ENCODE measurements at regions of chr14 and their contacts with region 1.

Region 1: DNA sequence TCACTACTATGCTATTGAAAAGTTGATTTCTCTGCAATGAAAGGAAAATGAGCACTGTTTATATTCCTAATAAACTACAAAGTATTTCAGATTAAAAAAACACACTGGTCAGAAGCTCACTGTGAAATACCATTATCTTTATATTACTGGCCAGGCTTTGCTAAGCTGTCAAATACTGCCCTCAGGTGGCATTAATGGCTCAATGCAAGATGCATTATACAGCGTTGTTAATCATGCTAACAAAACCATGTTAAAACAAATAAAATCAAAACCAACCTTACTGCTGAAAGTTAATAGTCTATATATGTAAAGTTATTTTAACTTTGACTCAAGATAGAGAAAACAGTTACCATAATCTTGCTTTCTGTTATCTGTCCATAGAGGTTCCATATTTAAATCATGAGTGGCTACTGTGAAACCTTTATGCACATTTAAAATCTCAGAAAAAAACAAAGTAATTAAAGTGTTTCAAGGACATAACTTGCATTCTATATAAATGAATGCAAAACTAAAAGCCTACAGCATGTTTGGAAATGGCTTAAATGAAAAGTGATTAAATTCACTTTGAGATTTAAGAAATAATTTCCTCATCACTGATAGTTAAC is 121.7 kb downstream of the RALGAPA1 start:
- DNase-seq: peak; percentile 26
- H3K4me3 Mint-ChIP-seq: no peak overlapping the region
- H3K27ac Mint-ChIP-seq: no peak overlapping the region
- H3K4me1 Mint-ChIP-seq: peaks cover 15% of the 10 kb centered on the region
- H3K27me3 Mint-ChIP-seq: no peaks in the 10 kb centered on the region

Region 2: GRCh38 chr14:35140718-35141581 is 546.5 kb before region 1 on chr14:
- CTCF ChIA-PET with region 1: no interaction called
- POLR2A ChIA-PET with region 1: no interaction called
- intact Hi-C with region 1: loop called (anchors 5 kb)
- DNase-seq: no peak
- H3K4me3 Mint-ChIP-seq: no peak overlapping the region
- H3K27ac Mint-ChIP-seq: no peak overlapping the region
- H3K4me1 Mint-ChIP-seq: peaks cover 17% of the 10 kb centered on the region
- H3K27me3 Mint-ChIP-seq: no peaks in the 10 kb centered on the region

Region 3: DNA sequence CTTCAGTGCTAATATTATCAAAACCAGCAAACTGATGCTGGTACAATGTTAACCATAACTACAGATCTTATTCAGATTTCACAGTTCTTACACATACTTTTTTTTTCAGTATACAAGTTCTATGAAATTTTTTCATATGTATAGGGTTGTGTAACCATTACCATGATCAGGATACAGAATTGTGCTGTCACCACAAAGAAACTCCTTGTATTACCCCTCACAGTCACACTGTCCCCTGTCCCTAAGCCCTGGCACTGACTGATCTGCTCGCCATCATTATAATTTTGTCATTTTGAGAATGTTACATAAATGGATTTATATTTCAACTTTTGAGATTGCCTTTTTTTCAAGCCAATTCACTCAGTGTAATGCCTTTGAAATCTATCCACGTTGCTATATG is 261.6 kb before region 1 on chr14:
- CTCF ChIA-PET with region 1: interaction called, 3 read pairs
- POLR2A ChIA-PET with region 1: no interaction called
- intact Hi-C with region 1: loop called (anchors 2 kb)
- DNase-seq: no peak
- H3K4me3 Mint-ChIP-seq: no peak overlapping the region
- H3K27ac Mint-ChIP-seq: no peak overlapping the region
- H3K4me1 Mint-ChIP-seq: peaks cover 24% of the 10 kb centered on the region
- H3K27me3 Mint-ChIP-seq: no peaks in the 10 kb centered on the region

Region 4: GRCh38 chr14:35438910-35439713 is 248.3 kb before region 1 on chr14:
- CTCF ChIA-PET with region 1: interaction called, 15 read pairs
- POLR2A ChIA-PET with region 1: no interaction called
- intact Hi-C with region 1: loop called (anchors 1 kb)
- DNase-seq: no peak
- H3K4me3 Mint-ChIP-seq: no peak overlapping the region
- H3K27ac Mint-ChIP-seq: no peak overlapping the region
- H3K4me1 Mint-ChIP-seq: peaks cover 7% of the 10 kb centered on the region
- H3K27me3 Mint-ChIP-seq: no peaks in the 10 kb centered on the region

Region 5: GRCh38 chr14:35492569-35493014 is 194.8 kb before region 1 on chr14:
- CTCF ChIA-PET with region 1: no interaction called
- POLR2A ChIA-PET with region 1: no interaction called
- intact Hi-C with region 1: no loop called
- DNase-seq: no peak
- H3K4me3 Mint-ChIP-seq: no peak overlapping the region
- H3K27ac Mint-ChIP-seq: no peak overlapping the region
- H3K4me1 Mint-ChIP-seq: no peaks in the 10 kb centered on the region
- H3K27me3 Mint-ChIP-seq: peaks cover 14% of the 10 kb centered on the region

Region 6: DNA sequence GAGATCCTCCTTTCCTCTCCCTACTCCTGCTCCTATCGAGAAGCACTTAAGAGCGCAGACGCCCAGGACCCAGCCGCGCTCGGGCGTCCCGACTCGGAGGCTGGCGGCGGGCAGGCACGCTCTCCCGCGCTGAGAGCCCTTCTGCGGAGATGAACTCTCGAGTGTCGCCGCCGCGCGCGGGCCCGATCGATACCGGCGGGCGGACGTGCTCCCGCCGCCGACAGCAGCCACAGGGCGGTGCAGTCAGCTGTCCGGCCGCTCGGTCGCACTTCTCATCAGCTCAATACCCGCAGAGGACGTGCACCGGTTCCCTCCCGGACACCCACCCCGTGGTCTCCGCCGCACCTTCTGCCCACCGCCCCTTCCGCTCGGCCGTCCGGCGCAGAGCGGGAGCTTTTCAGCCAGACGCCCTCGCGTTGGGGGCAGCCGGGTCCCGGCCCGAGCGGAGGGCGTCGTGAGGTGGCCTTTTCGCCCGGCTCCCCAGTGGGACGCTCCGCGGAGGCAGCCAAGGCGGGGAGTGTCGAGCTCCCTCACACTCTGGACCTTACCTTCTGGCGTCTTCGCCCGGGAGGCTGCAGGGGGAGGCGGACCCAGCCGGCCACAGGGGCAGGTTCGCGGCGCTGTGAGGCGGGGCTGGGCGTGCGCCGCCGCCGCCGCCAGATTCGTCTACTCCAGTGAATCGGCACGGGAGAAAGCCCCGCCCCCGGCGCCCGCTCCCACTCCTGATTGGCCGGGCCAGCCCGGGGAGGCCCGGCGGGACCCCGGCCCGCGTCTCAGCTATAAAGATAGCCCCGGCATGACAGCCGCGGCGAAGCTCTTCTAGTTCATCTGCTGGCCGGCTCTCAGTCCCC is 153.9 kb before region 1 on chr14 and contains the start of gene INSM2:
- CTCF ChIA-PET with region 1: no interaction called
- POLR2A ChIA-PET with region 1: no interaction called
- intact Hi-C with region 1: loop called (anchors 2 kb)
- DNase-seq: peak; percentile 71
- H3K4me3 Mint-ChIP-seq: peak within 1 kb of the TSS; percentile 65
- H3K27ac Mint-ChIP-seq: no peak within 1 kb of the TSS
- H3K4me1 Mint-ChIP-seq: peaks cover 11% of the 10 kb centered on the region
- H3K27me3 Mint-ChIP-seq: peaks cover 35% of the 10 kb centered on the region
- total RNA-seq, gene INSM2: not detected

Region 7: DNA sequence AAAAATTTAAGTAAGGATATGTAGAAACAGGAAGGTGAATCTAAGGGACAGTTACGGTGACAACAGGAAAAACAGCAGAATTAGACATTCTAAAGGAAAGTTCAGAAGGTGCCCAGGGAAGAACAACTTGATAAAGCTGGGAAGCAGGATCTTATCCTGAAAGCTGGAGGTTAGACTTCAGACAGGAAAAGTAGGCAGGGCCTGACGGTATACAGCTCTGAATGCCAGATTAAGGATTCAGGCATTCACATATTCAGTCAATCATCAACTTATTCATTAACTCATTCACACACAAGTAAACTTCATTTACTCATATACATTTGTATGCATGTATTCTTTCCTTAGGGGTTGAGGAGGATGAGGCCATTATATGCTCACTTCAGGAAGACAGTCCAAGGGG is 40.3 kb after region 1 on chr14:
- CTCF ChIA-PET with region 1: no interaction called
- POLR2A ChIA-PET with region 1: no interaction called
- intact Hi-C with region 1: no loop called
- DNase-seq: no peak
- H3K4me3 Mint-ChIP-seq: no peak overlapping the region
- H3K27ac Mint-ChIP-seq: no peak overlapping the region
- H3K4me1 Mint-ChIP-seq: no peaks in the 10 kb centered on the region
- H3K27me3 Mint-ChIP-seq: no peaks in the 10 kb centered on the region

Region 8: DNA sequence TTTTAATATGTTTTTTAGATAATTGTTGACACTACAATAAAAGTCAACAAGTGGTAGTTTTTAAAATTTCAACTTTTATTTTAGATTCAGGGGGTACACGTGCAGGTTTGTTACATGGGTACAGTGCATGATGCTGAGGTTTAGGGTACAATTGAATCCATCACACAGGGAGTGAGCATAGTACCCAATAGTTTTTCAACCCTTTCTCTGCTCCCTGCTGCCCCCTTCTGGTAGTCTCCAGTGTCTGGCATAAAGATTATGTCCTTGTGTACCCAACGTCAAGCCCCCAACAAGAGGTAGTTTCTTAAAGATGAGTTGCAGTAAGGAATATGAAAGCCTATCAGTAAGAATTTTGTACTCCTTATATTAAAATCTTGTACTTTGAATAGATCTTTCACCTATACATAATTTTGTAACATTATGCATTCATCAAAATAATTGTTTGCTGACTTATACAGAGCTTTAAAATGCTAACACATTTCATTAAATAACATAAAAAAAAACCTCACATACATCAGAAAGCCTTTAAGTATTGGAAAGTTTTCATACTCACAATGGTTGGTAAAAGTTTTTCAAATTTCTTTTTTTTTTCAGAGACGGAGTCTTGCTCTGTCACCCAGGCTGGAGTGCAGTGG is 127.1 kb after region 1 on chr14:
- CTCF ChIA-PET with region 1: interaction called, 13 read pairs
- POLR2A ChIA-PET with region 1: no interaction called
- intact Hi-C with region 1: loop called (anchors 2 kb)
- DNase-seq: peak; percentile 83
- H3K4me3 Mint-ChIP-seq: no peak overlapping the region
- H3K27ac Mint-ChIP-seq: no peak overlapping the region
- H3K4me1 Mint-ChIP-seq: no peaks in the 10 kb centered on the region
- H3K27me3 Mint-ChIP-seq: no peaks in the 10 kb centered on the region